ENCODE measurements at regions of chrX and their contacts with region 1.

Region 1: GRCh38 chrX:37745354-37745753 is 34.5 kb upstream of the CYBB start:
- DNase-seq: peak; percentile 60 to 84 (median 62)
- H3K4me3 ChIP-seq: no peak overlapping the region
- H3K4me3 Mint-ChIP-seq: peak overlapping the region in 1 of 7 donors; percentile 35
- H3K27ac ChIP-seq: no peak overlapping the region
- H3K27ac Mint-ChIP-seq: peak overlapping the region in 1 of 8 donors; percentile 72
- H3K4me1 ChIP-seq: no peaks in the 10 kb centered on the region
- H3K4me1 Mint-ChIP-seq: peaks cover 14 to 18% (median 17%) of the 10 kb centered on the region in 3 donors
- H3K27me3 ChIP-seq: no peaks in the 10 kb centered on the region
- H3K27me3 Mint-ChIP-seq: peaks cover 0 to 5% of the 10 kb centered on the region in 2 donors

Region 2: GRCh38 chrX:37825209-37825842 is 80.0 kb after region 1 on chrX:
- CTCF ChIA-PET with region 1: interaction called, 118 read pairs
- POLR2A ChIA-PET with region 1: no interaction called
- DNase-seq: peak; percentile 34 to 66 (median 44)
- H3K4me3 ChIP-seq: no peak overlapping the region
- H3K4me3 Mint-ChIP-seq: no peak overlapping the region
- H3K27ac ChIP-seq: no peak overlapping the region
- H3K27ac Mint-ChIP-seq: no peak overlapping the region
- H3K4me1 ChIP-seq: peaks cover 9% of the 10 kb centered on the region
- H3K4me1 Mint-ChIP-seq: peaks cover 20 to 30% (median 30%) of the 10 kb centered on the region in 3 donors
- H3K27me3 ChIP-seq: no peaks in the 10 kb centered on the region
- H3K27me3 Mint-ChIP-seq: no peaks in the 10 kb centered on the region

Measured in CD8-positive, alpha-beta memory T cell (primary cell).